ENCODE measurements at regions of chr18 and their contacts with region 1.

Region 1: GRCh38 chr18:70319185-70319584 is 30.3 kb downstream of the SOCS6 start:
- DNase-seq: peak; percentile 48
- H3K4me3 ChIP-seq: no peak overlapping the region
- H3K27ac ChIP-seq: no peak overlapping the region
- H3K4me1 ChIP-seq: peaks cover 4% of the 10 kb centered on the region
- H3K27me3 ChIP-seq: no peaks in the 10 kb centered on the region
- CTCF ChIP-seq: no peak

Region 2: GRCh38 chr18:69383186-69383585 is 936.0 kb before region 1 on chr18:
- CTCF ChIA-PET with region 1: no interaction called
- POLR2A ChIA-PET with region 1: interaction called, 18 read pairs
- intact Hi-C with region 1: no loop called
- DNase-seq: no peak
- H3K4me3 ChIP-seq: no peak overlapping the region
- H3K27ac ChIP-seq: no peak overlapping the region
- H3K4me1 ChIP-seq: no peaks in the 10 kb centered on the region
- H3K27me3 ChIP-seq: no peaks in the 10 kb centered on the region
- CTCF ChIP-seq: no peak

Region 3: GRCh38 chr18:70506511-70506910 is 187.3 kb after region 1 on chr18:
- CTCF ChIA-PET with region 1: no interaction called
- POLR2A ChIA-PET with region 1: no interaction called
- intact Hi-C with region 1: no loop called
- DNase-seq: no peak
- H3K4me3 ChIP-seq: no peak overlapping the region
- H3K27ac ChIP-seq: no peak overlapping the region
- H3K4me1 ChIP-seq: peaks cover 24% of the 10 kb centered on the region
- H3K27me3 ChIP-seq: no peaks in the 10 kb centered on the region
- CTCF ChIP-seq: no peak